ENCODE measurements at regions of chr1 and their contacts with region 1.

Region 1: GRCh38 chr1:63367215-63368103 is at the start of gene ALG6:
- DNase-seq: peak; percentile 94
- H3K4me3 ChIP-seq: peak within 1 kb of the TSS; percentile 90
- H3K27ac ChIP-seq: peak within 1 kb of the TSS; percentile 37
- H3K4me1 ChIP-seq: peaks cover 6% of the 10 kb centered on the region
- CTCF ChIP-seq: no peak
- total RNA-seq, gene ALG6: 29.3 TPM in 2 replicates

Region 2: DNA sequence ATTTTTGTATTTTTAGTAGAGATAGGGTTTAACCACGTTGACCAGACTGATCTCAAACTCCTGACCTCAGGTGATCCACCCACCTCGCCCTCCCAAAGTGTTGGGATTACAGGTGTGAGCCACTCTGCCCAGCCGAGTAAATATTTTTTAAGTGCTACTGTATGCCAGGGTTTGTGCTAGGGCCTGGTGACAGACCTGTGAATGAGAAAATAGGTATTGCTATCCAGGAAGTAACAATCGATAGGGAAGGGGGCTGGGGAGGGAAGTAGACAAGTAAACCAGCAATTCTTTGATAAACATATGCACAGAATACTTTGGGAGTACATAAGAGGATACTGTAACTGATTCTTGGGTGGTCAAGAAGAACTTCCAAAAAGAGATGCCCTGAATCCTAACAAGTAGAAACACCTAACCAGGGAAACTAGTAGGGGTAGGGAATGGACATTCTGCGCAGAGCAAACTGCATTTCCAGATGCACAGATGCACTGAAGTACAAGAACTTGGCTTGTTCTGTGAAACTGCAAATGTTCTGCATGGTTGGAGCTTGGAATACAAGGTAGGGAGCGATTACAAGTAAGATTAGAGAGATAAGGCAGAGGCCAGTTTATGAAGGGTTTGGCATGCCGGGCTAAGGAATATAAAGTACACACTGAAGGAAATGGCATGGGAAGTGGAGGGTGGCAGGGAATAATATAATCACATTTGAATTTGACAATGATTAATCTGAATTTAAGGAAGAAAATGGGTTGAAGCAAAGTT is 660.3 kb before region 1 on chr1:
- CTCF ChIA-PET with region 1: no interaction called
- POLR2A ChIA-PET with region 1: no interaction called
- intact Hi-C with region 1: no loop called
- DNase-seq: no peak
- H3K4me3 ChIP-seq: no peak overlapping the region
- H3K27ac ChIP-seq: no peak overlapping the region
- H3K4me1 ChIP-seq: no peaks in the 10 kb centered on the region
- CTCF ChIP-seq: no peak

Region 3: GRCh38 chr1:63327417-63328139 is 39.9 kb before region 1 on chr1:
- CTCF ChIA-PET with region 1: no interaction called
- POLR2A ChIA-PET with region 1: interaction called, 5 read pairs
- intact Hi-C with region 1: loop called (anchors 2 kb)
- DNase-seq: peak; percentile 64
- H3K4me3 ChIP-seq: no peak overlapping the region
- H3K27ac ChIP-seq: no peak overlapping the region
- H3K4me1 ChIP-seq: no peaks in the 10 kb centered on the region
- CTCF ChIP-seq: peak; percentile 88

Region 4: DNA sequence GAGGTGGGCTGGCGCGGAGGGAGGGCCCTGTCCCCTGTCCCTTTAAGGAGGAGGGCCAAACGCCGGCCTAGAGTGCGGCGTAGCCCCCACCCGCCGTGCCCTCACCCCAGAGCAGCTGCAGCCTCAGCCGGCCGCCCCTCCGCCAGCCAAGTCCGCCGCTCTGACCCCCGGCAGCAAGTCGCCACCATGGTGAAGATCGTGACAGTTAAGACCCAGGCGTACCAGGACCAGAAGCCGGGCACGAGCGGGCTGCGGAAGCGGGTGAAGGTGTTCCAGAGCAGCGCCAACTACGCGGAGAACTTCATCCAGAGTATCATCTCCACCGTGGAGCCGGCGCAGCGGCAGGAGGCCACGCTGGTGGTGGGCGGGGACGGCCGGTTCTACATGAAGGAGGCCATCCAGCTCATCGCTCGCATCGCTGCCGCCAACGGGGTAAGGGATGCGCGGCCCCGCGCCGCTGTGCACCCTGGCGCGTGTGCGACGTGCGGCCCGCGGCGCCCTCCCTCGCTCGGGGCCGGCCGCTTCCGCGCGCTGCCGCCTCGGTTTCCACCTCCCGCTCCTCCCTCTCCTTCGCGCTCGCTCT is 225.9 kb after region 1 on chr1 and contains the start of gene PGM1:
- CTCF ChIA-PET with region 1: no interaction called
- POLR2A ChIA-PET with region 1: no interaction called
- intact Hi-C with region 1: loop called (anchors 1 kb)
- DNase-seq: peak; percentile 85
- H3K4me3 ChIP-seq: peak within 1 kb of the TSS; percentile 94
- H3K27ac ChIP-seq: peak within 1 kb of the TSS; percentile 76
- H3K4me1 ChIP-seq: peaks cover 11% of the 10 kb centered on the region
- CTCF ChIP-seq: no peak
- total RNA-seq, gene PGM1: 39.2 and 43.2 TPM in 2 replicates

Measured in OCI-LY7 (cell line).